ENCODE measurements at regions of chr12 and their contacts with region 1.

Region 1: GRCh38 chr12:949453-950191 is at the start of gene RAD52:
- DNase-seq: peak; percentile 82 to 100
- ATAC-seq: peak; percentile 96 to 97
- H3K4me3 ChIP-seq: peak within 1 kb of the TSS; percentile 69
- H3K27ac ChIP-seq: peak within 1 kb of the TSS; percentile 88 to 98
- H3K4me1 ChIP-seq: peaks cover 11% of the 10 kb centered on the region; the same call in 1 of the 3 replicates
- CTCF ChIP-seq: peak; percentile 95
- EP300 ChIP-seq: no peak
- POLR2A ChIP-seq: peak; percentile 77
- RAD21 ChIP-seq: peak; percentile 87 to 94
- polyA plus RNA-seq, gene RAD52: 23.6 and 29.6 TPM in 2 replicates

Region 2: GRCh38 chr12:304805-305204 is 644.8 kb before region 1 on chr12:
- CTCF ChIA-PET with region 1: no interaction called
- POLR2A ChIA-PET with region 1: interaction called, 10 read pairs
- DNase-seq: no peak
- ATAC-seq: no peak
- H3K4me3 ChIP-seq: no peak overlapping the region
- H3K27ac ChIP-seq: no peak overlapping the region
- H3K4me1 ChIP-seq: no peaks in the 10 kb centered on the region
- CTCF ChIP-seq: no peak
- EP300 ChIP-seq: no peak
- POLR2A ChIP-seq: no peak
- RAD21 ChIP-seq: no peak

Region 3: DNA sequence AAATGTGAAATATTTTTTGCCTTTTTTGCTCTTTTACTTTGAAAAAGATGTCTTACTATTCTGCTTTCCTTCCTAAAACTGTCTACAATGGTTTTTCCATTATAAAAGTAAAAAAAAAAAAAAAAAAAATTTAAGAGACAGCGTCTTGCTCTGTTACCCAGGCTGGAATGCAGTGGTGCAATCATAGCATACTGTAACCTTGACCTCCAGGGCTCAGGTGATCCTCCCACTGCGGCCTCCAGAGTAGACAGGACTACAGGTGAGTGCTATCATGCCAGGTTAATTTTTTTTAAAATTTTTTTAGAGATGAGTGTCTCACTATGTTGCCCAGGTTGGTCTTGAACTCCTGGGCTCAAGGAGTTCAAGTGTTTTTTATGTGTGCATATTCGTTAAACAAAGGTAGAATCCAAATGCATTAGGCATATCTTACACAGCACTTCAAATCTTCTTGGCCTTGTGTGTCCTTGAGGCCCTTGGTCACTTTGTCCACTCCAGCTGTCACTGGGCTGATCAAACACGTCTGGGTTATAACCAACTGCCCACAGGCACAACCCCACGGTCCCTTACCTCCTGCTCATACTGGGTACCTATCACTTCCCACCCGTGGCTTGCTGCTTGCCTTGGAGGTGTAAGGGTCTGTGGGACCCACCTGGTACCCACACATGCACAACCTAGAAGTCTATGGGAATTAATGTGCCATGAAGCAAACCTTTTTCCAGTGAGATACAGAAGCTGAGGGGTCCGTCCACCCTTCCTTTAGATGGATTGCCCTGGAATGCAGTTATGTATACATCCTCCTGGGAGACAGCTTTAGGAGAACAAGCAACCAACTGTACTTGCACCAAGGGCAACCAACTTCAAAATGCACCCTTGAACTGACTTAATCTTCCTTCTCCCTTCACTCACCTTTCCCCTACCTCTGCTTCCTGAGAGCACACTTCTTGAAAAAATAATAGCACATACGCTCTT is 13.0 kb before region 1 on chr12:
- CTCF ChIA-PET with region 1: interaction called, 12 read pairs
- POLR2A ChIA-PET with region 1: interaction called, 7 read pairs
- DNase-seq: no peak
- ATAC-seq: no peak
- H3K4me3 ChIP-seq: no peak overlapping the region
- H3K27ac ChIP-seq: no peak overlapping the region
- H3K4me1 ChIP-seq: no peaks in the 10 kb centered on the region
- CTCF ChIP-seq: no peak
- EP300 ChIP-seq: no peak
- POLR2A ChIP-seq: no peak
- RAD21 ChIP-seq: no peak

Region 4: DNA sequence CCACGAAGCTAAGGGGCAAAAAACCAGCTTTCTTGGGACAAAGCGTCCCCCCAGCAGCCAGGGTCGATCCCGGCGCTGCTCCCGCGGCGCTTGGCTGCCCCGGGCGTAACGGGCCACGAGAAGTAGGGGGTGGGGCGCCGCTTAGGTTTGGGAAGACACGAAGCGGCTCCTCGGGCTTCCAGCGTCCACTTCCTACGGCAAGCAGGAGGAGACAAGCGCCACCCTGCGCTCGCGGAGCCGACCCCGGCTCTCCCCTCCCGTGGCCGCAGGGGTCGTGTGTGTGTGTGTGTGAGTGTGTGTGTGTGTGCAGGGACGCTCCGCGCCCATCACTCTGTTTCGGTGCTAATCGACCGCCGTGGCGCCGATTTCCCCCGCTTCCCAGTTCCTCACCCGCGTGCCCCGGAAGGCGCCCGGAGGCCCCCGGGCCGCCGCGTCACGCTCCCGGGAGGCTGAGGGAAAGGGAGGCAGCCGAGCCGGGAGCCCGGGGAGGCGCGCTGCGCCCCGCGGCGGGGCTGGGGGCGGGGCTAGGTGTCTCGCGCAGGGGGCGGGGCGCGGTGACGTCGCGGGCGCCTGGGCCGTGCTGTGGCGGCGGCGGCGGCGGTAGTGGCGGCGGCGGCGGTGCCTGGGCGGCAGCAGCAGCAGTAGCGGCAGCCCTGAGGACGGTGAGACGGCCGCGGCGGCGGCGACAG is 41.2 kb after region 1 on chr12 and contains the start of gene ERC1:
- CTCF ChIA-PET with region 1: interaction called, 6 read pairs
- POLR2A ChIA-PET with region 1: interaction called, 20 read pairs
- DNase-seq: peak; percentile 88 to 96
- ATAC-seq: peak; percentile 87
- H3K4me3 ChIP-seq: peak within 1 kb of the TSS; percentile 93
- H3K27ac ChIP-seq: peak within 1 kb of the TSS; percentile 96 to 98
- H3K4me1 ChIP-seq: peaks cover 42% of the 10 kb centered on the region
- CTCF ChIP-seq: no peak
- EP300 ChIP-seq: no peak
- POLR2A ChIP-seq: peak; percentile 51
- RAD21 ChIP-seq: no peak; a peak in 2 of 5 replicates
- polyA plus RNA-seq, gene ERC1: 20.9 and 23.6 TPM in 2 replicates

Region 5: GRCh38 chr12:1093166-1093751 is 143.6 kb after region 1 on chr12:
- CTCF ChIA-PET with region 1: interaction called, 13 read pairs
- POLR2A ChIA-PET with region 1: interaction called, 5 read pairs
- DNase-seq: peak; percentile 20 to 75
- ATAC-seq: peak; percentile 87 to 92
- H3K4me3 ChIP-seq: no peak overlapping the region
- H3K27ac ChIP-seq: no peak overlapping the region
- H3K4me1 ChIP-seq: no peaks in the 10 kb centered on the region
- CTCF ChIP-seq: peak; percentile 64
- EP300 ChIP-seq: no peak
- POLR2A ChIP-seq: no peak
- RAD21 ChIP-seq: peak; percentile 64 to 74

Region 6: DNA sequence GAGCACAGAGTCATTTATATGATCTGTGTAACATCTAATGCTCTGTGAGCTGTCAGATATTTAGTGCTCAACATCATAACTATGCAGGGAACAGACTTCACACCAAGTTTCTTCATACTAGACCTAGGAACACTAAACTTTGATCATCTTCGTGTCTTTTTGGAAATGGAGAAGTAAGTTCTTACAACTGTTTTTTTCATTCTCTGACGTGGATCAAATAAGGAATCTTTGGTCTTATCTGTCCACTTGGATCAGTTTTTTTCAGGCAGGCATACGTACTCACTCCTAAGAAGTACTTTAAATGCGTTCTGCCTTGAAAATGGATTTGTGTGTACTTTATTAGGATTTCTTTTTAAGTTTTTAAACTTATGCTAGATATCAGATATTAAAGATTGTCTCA is 453.8 kb after region 1 on chr12:
- CTCF ChIA-PET with region 1: no interaction called
- POLR2A ChIA-PET with region 1: no interaction called
- DNase-seq: no peak
- ATAC-seq: no peak
- H3K4me3 ChIP-seq: no peak overlapping the region
- H3K27ac ChIP-seq: no peak overlapping the region
- H3K4me1 ChIP-seq: no peaks in the 10 kb centered on the region
- CTCF ChIP-seq: no peak
- EP300 ChIP-seq: no peak
- POLR2A ChIP-seq: no peak
- RAD21 ChIP-seq: no peak

Region 7: GRCh38 chr12:1583421-1584078 is 633.9 kb after region 1 on chr12:
- CTCF ChIA-PET with region 1: interaction called, 18 read pairs
- POLR2A ChIA-PET with region 1: no interaction called
- DNase-seq: peak; percentile 74 to 87
- ATAC-seq: peak; percentile 77 to 91; a peak in 5 of 6 replicates
- H3K4me3 ChIP-seq: no peak overlapping the region
- H3K27ac ChIP-seq: no peak overlapping the region
- H3K4me1 ChIP-seq: 0 out of 3 replicates have a peak, but pooled peaks cover 2% of the 10 kb centered on the region
- CTCF ChIP-seq: peak; percentile 96
- EP300 ChIP-seq: no peak
- POLR2A ChIP-seq: no peak
- RAD21 ChIP-seq: peak; percentile 97 to 98

Measured in A549 (cell line).